Colonic mucosa (tissue), 4 donors: ENCODE measurements at regions of chr6 and their contacts with region 1.

Region 1: DNA sequence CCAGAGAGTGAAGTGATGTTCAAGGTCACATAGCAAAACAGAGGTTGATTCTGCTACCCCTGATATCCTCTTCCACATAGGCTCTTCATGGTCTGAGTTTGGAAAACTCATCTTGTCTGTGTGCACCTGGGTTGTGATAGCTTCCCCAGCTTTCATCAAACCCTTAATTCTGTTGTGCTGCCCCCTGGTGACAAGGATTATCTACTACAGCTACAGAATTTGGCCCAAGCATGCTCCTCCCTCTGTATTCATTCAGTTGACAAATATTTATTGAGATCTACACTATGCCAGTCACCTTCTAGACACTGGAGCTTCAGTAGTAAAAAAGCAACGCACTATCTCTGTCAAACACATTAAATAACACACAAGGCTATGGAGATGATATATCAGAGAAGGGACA is 50.4 kb downstream of the SMPDL3A start:
- DNase-seq: peak; percentile 83
- H3K4me3 ChIP-seq: no peak overlapping the region
- H3K27ac ChIP-seq: no peak overlapping the region
- H3K4me1 ChIP-seq: no peaks in the 10 kb centered on the region
- H3K27me3 ChIP-seq: no peaks in the 10 kb centered on the region
- CTCF ChIP-seq: peak; percentile 50

Region 2: GRCh38 chr6:122365775-122366403 is 473.6 kb before region 1 on chr6:
- intact Hi-C with region 1: no loop called
- DNase-seq: no peak
- H3K4me3 ChIP-seq: no peak overlapping the region
- H3K27ac ChIP-seq: no peak overlapping the region
- H3K4me1 ChIP-seq: no peaks in the 10 kb centered on the region
- H3K27me3 ChIP-seq: no peaks in the 10 kb centered on the region
- CTCF ChIP-seq: no peak

Region 3: DNA sequence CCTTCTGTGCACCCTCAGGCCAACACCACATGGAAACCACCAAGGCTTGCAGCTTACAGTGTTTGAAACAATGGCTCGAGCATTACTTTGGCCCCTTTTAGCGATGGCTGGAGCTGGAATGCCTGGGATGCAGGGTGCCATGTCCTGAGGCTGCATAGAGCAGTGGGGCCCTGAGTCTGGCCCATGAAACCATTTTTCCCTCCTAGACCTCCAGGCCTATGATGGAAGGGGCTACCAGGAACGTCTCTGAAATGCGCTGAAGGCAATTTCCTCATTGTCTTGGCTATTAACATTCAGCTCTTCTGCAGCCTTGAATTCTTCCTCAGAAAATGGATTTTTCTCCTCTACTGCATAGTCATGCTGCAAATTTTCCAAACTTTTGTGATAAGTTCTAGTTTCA is 338.0 kb before region 1 on chr6:
- intact Hi-C with region 1: no loop called
- DNase-seq: no peak
- H3K4me3 ChIP-seq: no peak overlapping the region
- H3K27ac ChIP-seq: no peak overlapping the region
- H3K4me1 ChIP-seq: no peaks in the 10 kb centered on the region
- H3K27me3 ChIP-seq: no peaks in the 10 kb centered on the region
- CTCF ChIP-seq: no peak

Region 4: GRCh38 chr6:122730775-122731386 is 108.6 kb before region 1 on chr6:
- intact Hi-C with region 1: loop called (anchors 5 kb)
- DNase-seq: no peak
- H3K4me3 ChIP-seq: no peak overlapping the region
- H3K27ac ChIP-seq: no peak overlapping the region
- H3K4me1 ChIP-seq: no peaks in the 10 kb centered on the region
- H3K27me3 ChIP-seq: no peaks in the 10 kb centered on the region
- CTCF ChIP-seq: peak; percentile 61

Region 5: GRCh38 chr6:122749451-122750050 is 89.9 kb before region 1 on chr6:
- intact Hi-C with region 1: loop called (anchors 5 kb)
- DNase-seq: no peak
- H3K4me3 ChIP-seq: no peak overlapping the region
- H3K27ac ChIP-seq: no peak overlapping the region
- H3K4me1 ChIP-seq: no peaks in the 10 kb centered on the region
- H3K27me3 ChIP-seq: no peaks in the 10 kb centered on the region
- CTCF ChIP-seq: no peak